Calu3 (cell line): ENCODE measurements at regions of chr3 and their contacts with region 1.

Region 1: DNA sequence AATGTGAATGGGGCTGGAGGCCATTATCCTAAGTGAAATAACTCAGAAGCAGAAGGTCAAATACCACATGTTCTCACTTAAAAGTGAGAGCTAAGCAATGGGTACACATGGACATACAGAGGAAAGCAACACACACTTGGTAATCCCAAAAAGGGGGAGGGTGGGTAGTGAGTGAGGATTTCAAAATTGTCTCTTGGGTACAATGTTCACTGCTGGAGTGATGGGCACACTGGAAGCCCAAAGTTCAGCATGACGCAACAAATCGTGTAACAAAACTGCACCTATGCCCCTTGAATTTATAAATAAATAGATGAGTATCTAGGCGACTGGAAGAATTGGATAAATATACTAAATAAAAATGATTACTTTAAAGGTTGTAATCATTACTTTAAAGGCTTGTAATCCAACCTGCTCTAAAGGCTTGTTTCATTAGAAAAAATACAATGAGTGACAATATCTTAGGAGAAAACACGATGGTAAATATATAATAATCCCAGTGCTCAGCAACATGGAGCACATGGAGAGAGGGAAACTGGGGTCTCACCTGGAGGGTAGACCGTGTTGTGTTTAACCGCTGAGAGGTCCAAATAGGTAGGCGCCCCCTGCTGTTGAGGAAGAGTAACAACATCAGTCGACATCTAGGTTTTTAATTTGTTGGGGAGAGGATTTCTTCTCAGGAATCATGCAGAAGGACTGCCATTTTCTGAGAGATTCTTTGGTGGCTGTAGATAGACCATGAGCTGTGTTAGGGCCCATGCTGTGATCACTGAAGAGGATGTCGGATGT is 78.5 kb upstream of the ROBO1 start:
- DNase-seq: no peak
- H3K4me3 Mint-ChIP-seq: no peak overlapping the region
- H3K27ac Mint-ChIP-seq: no peak overlapping the region
- H3K4me1 Mint-ChIP-seq: peaks cover 31% of the 10 kb centered on the region
- H3K27me3 Mint-ChIP-seq: no peaks in the 10 kb centered on the region
- CTCF ChIP-seq: no peak

Region 2: DNA sequence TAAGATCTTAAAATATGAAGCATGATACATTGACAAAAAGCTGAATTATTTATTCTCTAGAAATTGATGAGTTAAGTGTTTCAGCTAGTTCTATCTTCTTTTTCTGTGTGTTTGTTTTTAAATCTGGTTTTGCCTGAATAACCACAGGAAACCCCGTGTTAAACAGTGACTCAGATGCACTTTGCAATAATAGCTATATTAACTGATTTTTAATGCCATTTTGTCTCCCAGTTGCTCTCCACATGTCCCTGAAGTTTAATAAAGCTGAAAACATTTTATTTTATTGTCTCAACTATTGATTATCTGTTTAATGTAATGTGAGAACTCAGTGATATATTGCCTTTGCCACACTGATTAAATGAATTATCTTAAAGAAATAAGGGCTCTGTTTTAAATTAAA is 35.8 kb before region 1 on chr3:
- CTCF ChIA-PET with region 1: no interaction called
- intact Hi-C with region 1: no loop called
- DNase-seq: no peak
- H3K4me3 Mint-ChIP-seq: no peak overlapping the region
- H3K27ac Mint-ChIP-seq: no peak overlapping the region
- H3K4me1 Mint-ChIP-seq: no peaks in the 10 kb centered on the region
- H3K27me3 Mint-ChIP-seq: no peaks in the 10 kb centered on the region
- CTCF ChIP-seq: no peak

Region 3: DNA sequence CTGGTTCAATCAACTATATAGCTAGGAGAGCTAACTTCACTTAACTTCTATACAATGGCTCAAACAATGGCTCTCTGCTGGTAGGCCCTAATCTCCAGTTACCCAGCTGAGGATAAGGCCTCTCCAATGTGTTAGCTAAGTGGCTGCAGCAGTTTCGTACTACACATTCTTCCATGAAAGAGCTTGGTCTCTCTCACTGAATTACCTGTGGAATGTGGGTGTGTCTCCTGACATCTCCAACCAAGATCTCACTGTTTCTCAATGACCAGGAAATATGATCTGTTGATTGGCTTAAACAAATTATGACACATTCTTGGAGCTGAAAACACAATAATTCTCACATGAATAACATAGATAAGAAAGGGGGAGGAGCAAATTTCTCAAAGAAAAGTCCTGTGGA is 91.2 kb after region 1 on chr3:
- CTCF ChIA-PET with region 1: no interaction called
- intact Hi-C with region 1: loop called (anchors 10 kb)
- DNase-seq: peak; percentile 63
- H3K4me3 Mint-ChIP-seq: no peak overlapping the region
- H3K27ac Mint-ChIP-seq: peak overlapping the region; percentile 95
- H3K4me1 Mint-ChIP-seq: peaks cover 18% of the 10 kb centered on the region
- H3K27me3 Mint-ChIP-seq: no peaks in the 10 kb centered on the region
- CTCF ChIP-seq: no peak

Region 4: GRCh38 chr3:79954756-79955155 is 108.4 kb after region 1 on chr3:
- CTCF ChIA-PET with region 1: no interaction called
- intact Hi-C with region 1: no loop called
- DNase-seq: no peak
- H3K4me3 Mint-ChIP-seq: no peak overlapping the region
- H3K27ac Mint-ChIP-seq: no peak overlapping the region
- H3K4me1 Mint-ChIP-seq: no peaks in the 10 kb centered on the region
- H3K27me3 Mint-ChIP-seq: no peaks in the 10 kb centered on the region
- CTCF ChIP-seq: no peak

Region 5: DNA sequence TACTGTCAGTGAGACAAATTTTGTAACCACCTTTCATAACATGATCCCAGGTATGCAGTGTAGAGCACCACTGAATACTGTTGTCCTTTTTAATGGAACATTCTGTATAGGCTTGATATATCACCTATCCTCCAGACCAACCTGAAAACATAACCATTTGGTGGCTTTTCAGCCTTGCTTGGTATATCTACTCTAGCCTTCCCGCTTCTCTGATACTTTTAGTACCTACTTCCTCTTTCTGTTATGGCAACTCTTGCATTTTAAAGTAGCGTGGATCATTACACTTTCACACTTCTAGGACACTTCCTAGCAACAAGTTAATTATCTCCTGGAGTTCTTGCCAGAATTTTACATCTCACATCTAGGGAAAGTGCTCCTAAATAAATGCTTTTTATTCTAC is 148.1 kb after region 1 on chr3:
- CTCF ChIA-PET with region 1: no interaction called
- intact Hi-C with region 1: loop called (anchors 10 kb)
- DNase-seq: no peak
- H3K4me3 Mint-ChIP-seq: no peak overlapping the region
- H3K27ac Mint-ChIP-seq: no peak overlapping the region
- H3K4me1 Mint-ChIP-seq: peaks cover 5% of the 10 kb centered on the region
- H3K27me3 Mint-ChIP-seq: no peaks in the 10 kb centered on the region
- CTCF ChIP-seq: no peak